Dendritic cell treated with granulocyte-macrophage colony-stimulating factor and Interleukin-4, amounts not matched to agents 40 ng/mL and 50 ng/mL, for 4 days (primary cell): ENCODE measurements at regions of chr14 and their contacts with region 1.

Region 1: DNA sequence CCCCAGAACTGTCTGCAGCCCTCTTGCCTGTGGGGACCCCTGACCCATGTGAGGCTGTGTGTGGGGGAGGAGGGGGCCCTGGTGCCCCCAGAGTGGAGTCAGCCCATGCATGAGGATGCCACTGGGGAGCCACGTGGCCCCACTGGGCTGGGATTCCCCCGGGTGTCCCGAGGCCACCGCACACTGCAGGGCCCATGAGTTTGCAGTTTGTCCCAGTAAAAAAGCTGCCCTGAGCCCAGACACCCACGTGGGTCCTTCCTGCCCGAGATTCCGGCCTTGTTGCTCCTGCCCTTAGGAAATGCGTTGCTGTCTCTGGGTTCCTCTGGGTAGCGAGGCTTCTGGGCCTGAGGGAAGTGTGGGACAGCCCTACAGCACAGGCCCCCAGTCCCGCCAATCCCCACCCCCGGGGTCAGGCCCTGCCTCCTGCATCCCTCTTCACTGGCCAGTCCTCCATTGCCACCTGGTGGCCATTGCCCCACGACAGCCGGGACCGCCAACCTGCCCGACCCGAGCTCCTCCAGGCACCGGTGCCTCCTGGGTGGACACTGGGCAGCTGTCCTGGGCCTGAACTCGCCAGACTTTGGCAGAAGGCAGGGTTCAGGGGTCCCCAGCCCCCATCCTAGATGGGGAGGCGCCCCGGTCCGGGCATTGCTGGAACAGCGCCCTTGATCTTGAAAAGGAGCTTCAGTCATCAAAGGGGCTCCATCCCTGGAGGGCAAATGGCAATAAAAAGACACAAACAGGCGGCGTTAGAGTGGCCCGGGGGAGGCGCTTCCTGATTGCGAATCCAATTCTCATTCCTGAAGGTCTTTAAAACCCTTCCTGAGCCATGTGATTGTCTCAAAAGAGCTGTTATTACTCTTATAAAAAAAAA is 15.6 kb upstream of the C14orf180 start:
- H3K4me3 Mint-ChIP-seq: no peak overlapping the region
- H3K27ac Mint-ChIP-seq: no peak overlapping the region
- H3K4me1 Mint-ChIP-seq: peaks cover 5% of the 10 kb centered on the region
- H3K27me3 Mint-ChIP-seq: peaks cover 25% of the 10 kb centered on the region

Region 2: DNA sequence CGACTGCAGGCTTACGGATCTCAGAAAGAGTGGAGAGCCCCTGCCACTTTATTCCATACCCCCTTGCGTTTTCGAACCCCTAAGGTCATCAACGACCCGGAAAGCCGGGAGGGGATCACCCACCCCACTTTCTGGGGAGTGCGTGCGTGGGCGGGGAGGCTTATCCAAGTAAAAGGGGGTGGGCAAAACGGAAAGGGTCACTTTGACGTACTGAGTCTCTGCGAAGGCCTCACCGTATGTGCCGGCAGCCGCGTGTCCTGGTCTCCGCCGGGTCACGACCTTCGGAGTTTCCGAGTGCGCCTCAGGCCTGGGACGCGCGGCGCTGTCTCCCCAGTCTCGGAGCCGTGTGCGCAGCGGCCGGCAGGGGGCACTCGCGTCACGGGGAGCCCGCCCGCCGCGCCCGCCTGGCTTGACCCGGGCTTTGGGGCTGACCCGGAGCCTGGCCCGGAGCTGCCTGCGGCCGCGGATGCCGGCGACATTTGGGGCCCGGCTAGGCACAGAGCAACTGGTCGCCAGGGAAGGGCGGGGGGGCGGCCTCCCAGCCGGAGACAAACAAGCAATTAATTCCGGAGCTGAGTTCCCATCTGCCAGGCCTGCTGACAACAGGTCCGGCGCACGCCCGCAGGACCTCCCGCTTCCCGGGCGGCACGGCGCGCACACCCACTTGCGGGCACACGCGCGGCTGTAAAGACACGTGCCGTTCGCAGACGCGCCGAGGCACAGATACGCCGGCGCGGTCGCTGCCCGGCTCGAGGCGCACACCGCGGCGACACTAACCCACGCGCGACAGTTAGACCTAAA is 426.5 kb before region 1 on chr14:
- intact Hi-C with region 1: loop called (anchors 10 kb)
- H3K4me3 Mint-ChIP-seq: peak overlapping the region; percentile 59
- H3K27ac Mint-ChIP-seq: no peak overlapping the region
- H3K4me1 Mint-ChIP-seq: peaks cover 12% of the 10 kb centered on the region
- H3K27me3 Mint-ChIP-seq: peaks cover 76% of the 10 kb centered on the region

Region 3: GRCh38 chr14:104331871-104332605 is 231.9 kb before region 1 on chr14:
- intact Hi-C with region 1: no loop called
- H3K4me3 Mint-ChIP-seq: no peak overlapping the region
- H3K27ac Mint-ChIP-seq: no peak overlapping the region
- H3K4me1 Mint-ChIP-seq: no peaks in the 10 kb centered on the region
- H3K27me3 Mint-ChIP-seq: no peaks in the 10 kb centered on the region

Region 4: GRCh38 chr14:104624939-104625338 is 61.0 kb after region 1 on chr14:
- intact Hi-C with region 1: no loop called
- H3K4me3 Mint-ChIP-seq: no peak overlapping the region
- H3K27ac Mint-ChIP-seq: no peak overlapping the region
- H3K4me1 Mint-ChIP-seq: no peaks in the 10 kb centered on the region
- H3K27me3 Mint-ChIP-seq: peaks cover 33% of the 10 kb centered on the region